Activated naive CD4-positive, alpha-beta T cell treated with anti-CD3 and anti-CD28 coated beads for 36 hours (primary cell): ENCODE measurements at regions of chr2 and their contacts with region 1.

Region 1: DNA sequence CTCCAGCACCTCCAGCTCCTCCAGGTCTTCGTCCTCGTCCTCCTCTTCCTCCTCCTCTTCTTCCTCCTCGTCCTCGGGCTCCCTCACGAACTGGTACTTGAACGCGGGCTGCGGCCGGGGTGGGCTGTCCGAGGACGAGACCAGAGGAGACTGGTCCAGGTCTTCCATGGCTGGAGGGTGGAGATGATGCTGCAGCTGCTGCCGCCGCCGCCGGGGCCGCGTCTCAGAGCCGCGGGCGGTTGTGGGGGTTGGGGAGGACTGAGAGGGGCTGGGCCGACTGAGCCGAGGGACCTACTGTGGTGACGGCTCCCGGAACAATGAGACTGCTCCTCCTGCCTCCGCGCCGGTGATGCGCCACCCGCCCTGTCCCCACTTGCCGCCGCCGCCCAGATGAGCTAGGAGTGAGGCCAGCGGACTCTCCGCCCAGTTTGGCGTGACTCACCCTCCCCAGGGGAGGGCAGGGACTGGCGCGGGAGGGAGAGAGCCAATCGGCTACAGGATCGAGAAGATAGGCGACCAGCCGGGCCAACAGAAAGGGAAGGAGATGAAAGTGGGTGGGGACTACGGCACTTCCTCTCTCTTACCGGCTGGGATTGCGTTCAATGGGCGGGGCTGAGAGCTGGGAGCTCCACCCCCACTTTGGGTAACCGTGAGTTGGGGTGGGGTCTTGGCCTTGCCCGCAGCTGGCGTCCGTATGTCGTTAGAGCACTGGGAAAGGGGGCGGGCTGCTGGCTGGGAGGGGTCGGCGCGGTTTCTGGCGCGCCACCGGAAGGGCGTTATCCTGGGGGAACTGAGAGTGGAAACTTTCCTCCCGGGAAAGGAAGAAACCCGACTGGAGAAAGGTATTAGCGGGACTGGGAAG is at the start of gene RTN4:
- DNase-seq: peak; percentile 99
- H3K4me3 Mint-ChIP-seq: peak within 1 kb of the TSS; percentile 97
- H3K27ac Mint-ChIP-seq: peak within 1 kb of the TSS; percentile 97
- H3K4me1 Mint-ChIP-seq: peaks cover 58% of the 10 kb centered on the region
- H3K27me3 Mint-ChIP-seq: no peaks in the 10 kb centered on the region
- total RNA-seq, gene RTN4: 76.4 to 76.7 TPM

Region 2: DNA sequence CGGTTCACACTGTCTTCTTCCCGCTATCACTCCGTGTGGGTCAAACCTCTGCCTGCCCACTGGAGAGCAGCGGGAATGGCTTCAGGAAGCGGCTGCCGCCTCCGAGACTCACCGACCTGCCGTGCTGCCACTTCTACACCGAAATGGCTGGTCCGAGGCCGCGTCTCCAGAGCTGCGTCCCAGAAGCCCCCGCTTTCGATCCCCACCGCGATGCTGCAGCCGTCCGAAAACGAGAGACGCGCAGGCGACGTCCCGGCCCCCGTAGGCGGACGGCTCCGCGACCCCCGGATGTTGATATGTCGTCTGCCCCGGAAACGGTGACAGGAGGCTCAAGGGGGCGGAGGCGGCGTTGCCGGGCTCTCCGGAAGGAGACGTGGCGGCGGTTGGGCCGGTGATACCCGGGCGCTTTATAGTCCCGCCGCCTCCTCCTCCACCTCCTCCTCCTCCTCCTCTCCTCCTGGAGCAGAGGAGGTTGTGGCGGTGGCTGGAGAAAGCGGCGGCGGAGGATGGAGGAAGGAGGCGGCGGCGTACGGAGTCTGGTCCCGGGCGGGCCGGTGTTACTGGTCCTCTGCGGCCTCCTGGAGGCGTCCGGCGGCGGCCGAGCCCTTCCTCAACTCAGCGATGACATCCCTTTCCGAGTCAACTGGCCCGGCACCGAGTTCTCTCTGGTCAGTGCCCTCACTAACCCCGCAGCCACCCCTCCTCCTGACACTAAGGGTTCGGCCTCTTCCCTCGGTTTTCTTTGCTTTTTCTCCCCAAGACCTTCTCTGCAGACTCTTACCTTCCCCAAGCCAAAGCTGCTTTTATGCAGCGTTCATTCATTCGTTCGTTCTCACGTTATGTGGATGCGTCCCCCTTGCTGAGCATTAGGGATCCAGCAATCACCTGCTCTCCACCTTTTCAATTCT is 1263.4 kb before region 1 on chr2 and contains the starts of genes ASB3 and ERLEC1:
- CTCF ChIA-PET with region 1: no interaction called
- intact Hi-C with region 1: loop called (anchors 5 kb)
- DNase-seq: peak; percentile 90
- H3K4me3 Mint-ChIP-seq: peak within 1 kb of the TSS; percentile 95
- H3K27ac Mint-ChIP-seq: peak within 1 kb of the TSS; percentile 89
- H3K4me1 Mint-ChIP-seq: peaks cover 50% of the 10 kb centered on the region
- H3K27me3 Mint-ChIP-seq: no peaks in the 10 kb centered on the region
- total RNA-seq, gene ASB3: 17.2 to 19.1 TPM
- total RNA-seq, gene ERLEC1: 16.7 to 18.5 TPM

Region 3: GRCh38 chr2:54558188-54559005 is 492.0 kb before region 1 on chr2:
- CTCF ChIA-PET with region 1: no interaction called
- intact Hi-C with region 1: loop called (anchors 2 kb)
- DNase-seq: peak; percentile 83
- H3K4me3 Mint-ChIP-seq: peak overlapping the region; percentile 87
- H3K27ac Mint-ChIP-seq: peak overlapping the region; percentile 99
- H3K4me1 Mint-ChIP-seq: peaks cover 43% of the 10 kb centered on the region
- H3K27me3 Mint-ChIP-seq: no peaks in the 10 kb centered on the region

Region 4: GRCh38 chr2:55010149-55010591 is 40.2 kb before region 1 on chr2:
- CTCF ChIA-PET with region 1: interaction called, 9 read pairs
- intact Hi-C with region 1: loop called (anchors 1 kb)
- DNase-seq: peak; percentile 54
- H3K4me3 Mint-ChIP-seq: peak overlapping the region; percentile 77
- H3K27ac Mint-ChIP-seq: peak overlapping the region; percentile 55
- H3K4me1 Mint-ChIP-seq: peaks cover 56% of the 10 kb centered on the region
- H3K27me3 Mint-ChIP-seq: no peaks in the 10 kb centered on the region

Region 5: DNA sequence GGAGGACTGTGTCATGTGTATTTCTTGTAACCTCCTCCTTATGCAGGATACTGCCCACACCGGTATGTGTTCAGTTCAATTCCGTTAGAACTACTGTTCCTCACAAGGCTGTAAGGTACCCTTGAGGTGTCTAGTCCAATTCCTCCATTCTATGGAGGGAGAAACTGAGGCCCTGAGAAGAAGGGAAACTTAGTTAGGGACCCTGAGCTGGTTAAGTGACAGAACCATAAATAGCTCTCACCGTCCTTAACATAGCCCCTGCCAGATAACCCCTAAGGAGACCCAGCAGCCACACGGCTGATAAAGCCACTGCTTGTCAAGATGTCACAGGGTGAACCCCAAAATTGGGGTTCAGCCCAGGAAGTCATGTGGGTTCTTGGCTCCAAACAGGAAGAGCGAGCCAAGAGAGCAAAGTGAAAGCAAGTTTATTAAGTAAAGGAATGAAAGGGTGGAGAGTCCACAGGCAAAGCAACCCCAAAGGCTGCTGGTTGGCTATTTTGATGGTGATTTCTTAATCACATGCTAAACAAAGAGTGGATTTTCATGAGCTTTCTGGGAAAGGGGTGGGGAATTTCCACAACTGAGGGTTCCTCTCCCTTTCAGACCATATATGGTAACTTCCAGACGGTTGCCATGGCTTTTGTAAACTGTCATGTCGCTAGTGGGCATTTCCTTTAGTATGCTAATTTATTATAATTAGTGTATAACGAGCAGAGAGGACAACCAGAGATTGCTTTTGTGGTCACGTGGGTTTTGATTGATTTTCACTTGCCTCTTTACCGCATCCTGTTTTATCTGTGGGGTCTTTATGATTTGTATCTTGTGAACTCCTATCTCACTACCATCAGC is 83.3 kb after region 1 on chr2:
- CTCF ChIA-PET with region 1: interaction called, 3 read pairs
- intact Hi-C with region 1: loop called (anchors 1 kb)
- DNase-seq: peak; percentile 80
- H3K4me3 Mint-ChIP-seq: peak overlapping the region; percentile 75
- H3K27ac Mint-ChIP-seq: peak overlapping the region; percentile 95
- H3K4me1 Mint-ChIP-seq: peaks cover 25% of the 10 kb centered on the region
- H3K27me3 Mint-ChIP-seq: no peaks in the 10 kb centered on the region

Region 6: DNA sequence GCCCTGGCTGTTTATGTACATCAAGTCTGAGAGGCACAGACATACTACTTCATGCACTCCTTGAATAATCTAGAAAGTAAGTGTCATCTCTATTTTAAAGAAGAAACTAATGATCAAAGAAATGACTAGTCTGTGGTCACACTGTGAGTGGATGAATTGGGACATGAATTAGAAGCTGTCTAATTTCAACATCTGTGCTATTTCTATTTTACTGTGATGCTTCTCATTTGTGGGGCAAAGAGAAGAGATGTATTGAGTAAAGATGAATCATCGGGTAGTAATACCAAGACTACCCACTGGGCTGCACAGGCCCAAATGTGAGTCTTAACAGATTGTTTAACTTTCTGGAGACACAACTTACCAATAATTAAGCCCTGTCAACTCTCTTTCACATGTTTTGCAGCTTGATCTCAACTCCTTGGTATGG is 261.1 kb after region 1 on chr2:
- CTCF ChIA-PET with region 1: no interaction called
- intact Hi-C with region 1: loop called (anchors 1 kb)
- DNase-seq: peak; percentile 63
- H3K4me3 Mint-ChIP-seq: no peak overlapping the region
- H3K27ac Mint-ChIP-seq: peak overlapping the region; percentile 57
- H3K4me1 Mint-ChIP-seq: peaks cover 25% of the 10 kb centered on the region
- H3K27me3 Mint-ChIP-seq: no peaks in the 10 kb centered on the region

Region 7: DNA sequence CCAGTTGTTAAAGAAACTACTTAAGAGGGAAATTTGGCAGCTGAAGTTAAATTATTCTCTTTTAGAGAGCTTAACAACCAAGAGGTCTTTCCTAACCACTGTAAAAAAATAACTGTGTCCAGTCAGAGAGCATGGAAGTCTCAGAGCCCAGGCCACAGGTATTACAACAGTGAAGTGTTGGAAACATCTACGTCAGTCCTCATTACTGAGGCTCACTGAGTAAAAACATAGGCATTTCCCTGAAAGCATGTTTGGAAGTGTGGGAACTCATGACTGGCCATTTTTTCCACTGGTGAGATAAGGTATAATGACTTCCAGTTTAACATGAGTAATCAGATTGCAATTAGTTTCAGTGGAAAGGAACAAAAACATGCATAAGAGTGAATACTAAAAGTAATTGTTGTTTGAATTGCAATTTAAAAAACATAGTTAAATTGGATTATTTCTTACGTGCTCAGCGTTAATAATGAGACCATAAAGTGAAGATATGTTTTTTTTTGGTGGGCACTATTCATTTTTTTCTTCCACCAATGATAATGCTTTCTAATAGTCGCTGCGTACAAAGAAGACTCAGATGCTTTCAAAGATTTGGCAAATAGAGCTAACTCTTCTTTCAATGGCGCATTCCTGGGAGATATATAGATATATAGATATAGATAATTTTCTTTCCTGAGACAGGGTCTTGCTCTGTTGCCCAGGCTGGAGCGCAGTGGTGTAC is 812.5 kb after region 1 on chr2:
- CTCF ChIA-PET with region 1: no interaction called
- intact Hi-C with region 1: no loop called
- DNase-seq: no peak
- H3K4me3 Mint-ChIP-seq: no peak overlapping the region
- H3K27ac Mint-ChIP-seq: no peak overlapping the region
- H3K4me1 Mint-ChIP-seq: no peaks in the 10 kb centered on the region
- H3K27me3 Mint-ChIP-seq: peaks cover 5% of the 10 kb centered on the region